Dendritic cell treated with granulocyte-macrophage colony-stimulating factor and Interleukin-4, amounts not matched to agents 40 ng/mL and 50 ng/mL, for 4 days (primary cell): ENCODE measurements at regions of chr5 and their contacts with region 1.

Region 1: DNA sequence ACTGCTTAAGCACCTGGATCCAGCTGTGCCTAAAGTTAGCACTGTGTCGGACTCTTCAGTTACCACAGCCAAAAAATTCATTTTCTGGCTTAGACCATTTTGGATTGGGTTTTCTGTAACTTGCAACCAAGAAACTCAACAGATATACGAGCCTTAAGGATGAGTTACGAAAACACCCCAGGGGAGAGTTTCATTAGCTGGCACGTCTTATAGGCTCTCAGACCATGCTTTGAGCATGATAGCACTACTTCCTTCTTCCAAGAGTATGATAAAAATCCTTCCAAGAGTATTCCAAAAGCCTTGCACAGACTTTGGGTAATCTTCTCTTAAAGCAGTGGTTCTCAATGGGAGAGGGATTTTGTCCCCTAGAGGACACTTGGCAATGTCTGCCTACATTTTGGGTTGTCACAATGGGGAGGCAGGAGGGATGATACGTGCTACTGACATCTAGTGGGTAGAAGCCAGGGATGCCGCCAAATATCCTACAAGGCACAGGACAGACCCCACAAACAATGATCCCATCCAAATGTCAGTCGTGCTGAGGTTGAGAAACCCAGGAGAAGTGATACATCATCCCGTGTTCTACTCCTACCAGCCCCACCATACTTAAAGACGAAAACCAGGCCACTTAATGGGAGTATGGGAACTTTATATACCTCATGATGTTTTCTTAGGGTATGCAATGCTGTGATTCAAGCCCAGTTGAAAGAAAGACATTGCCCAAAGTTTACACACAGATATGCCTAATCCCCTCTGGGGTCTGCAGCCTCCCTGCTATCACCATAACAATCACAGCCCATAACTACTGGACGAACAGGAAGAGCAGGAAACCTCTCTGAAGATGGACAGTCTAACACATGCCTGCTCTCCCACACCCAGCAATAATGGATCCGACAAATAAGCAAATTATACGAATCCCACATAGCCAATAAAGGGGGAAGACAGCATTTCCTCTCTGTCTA is 65.0 kb downstream of the SMIM23 start:
- H3K4me3 Mint-ChIP-seq: no peak overlapping the region
- H3K27ac Mint-ChIP-seq: no peak overlapping the region
- H3K4me1 Mint-ChIP-seq: peaks cover 36% of the 10 kb centered on the region
- H3K27me3 Mint-ChIP-seq: no peaks in the 10 kb centered on the region

Region 2: GRCh38 chr5:171484460-171484899 is 366.1 kb before region 1 on chr5:
- intact Hi-C with region 1: loop called (anchors 10 kb)
- H3K4me3 Mint-ChIP-seq: no peak overlapping the region
- H3K27ac Mint-ChIP-seq: no peak overlapping the region
- H3K4me1 Mint-ChIP-seq: no peaks in the 10 kb centered on the region
- H3K27me3 Mint-ChIP-seq: peaks cover 3% of the 10 kb centered on the region

Region 3: GRCh38 chr5:171629221-171630026 is 221.2 kb before region 1 on chr5:
- intact Hi-C with region 1: loop called (anchors 10 kb)
- H3K4me3 Mint-ChIP-seq: peak overlapping the region; percentile 40
- H3K27ac Mint-ChIP-seq: no peak overlapping the region
- H3K4me1 Mint-ChIP-seq: peaks cover 30% of the 10 kb centered on the region
- H3K27me3 Mint-ChIP-seq: peaks cover 11% of the 10 kb centered on the region